A549 (cell line): ENCODE measurements at regions of chr7 and their contacts with region 1.

Region 1: DNA sequence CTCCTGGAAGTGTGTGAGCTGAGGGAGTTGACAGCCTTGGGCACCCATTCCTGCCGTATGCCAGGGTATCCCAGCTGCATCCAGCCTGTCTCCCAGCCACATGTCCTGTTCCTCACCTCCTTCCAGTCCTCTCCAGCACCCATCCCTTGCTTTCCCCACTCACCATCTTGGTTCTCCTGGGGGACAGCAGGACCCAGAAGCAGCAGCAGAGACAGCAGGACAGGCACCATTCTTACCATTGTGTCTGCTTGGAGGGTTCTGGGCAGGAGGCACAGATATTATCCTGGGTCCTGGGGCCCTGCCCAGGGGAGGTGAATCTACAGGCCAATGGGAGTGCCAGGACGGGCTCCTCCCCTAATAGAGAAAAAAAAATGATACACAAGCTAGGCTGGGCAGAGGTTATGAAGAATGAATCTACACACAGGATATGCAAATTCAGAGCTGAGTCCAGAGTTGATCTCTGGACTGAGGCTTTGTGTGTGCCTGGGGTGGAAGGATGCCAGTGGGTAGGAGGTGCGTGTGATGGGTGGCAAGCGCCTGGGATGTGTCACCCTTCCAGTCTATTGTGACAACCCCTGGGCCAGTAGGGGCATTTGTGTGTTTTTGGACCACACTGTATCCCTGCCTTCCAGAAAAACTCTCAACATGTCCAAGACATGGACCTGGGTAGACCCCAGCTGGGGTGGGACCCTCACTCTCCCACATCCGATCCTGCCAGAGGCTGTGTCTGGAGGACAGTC is at the start of gene AZGP1:
- DNase-seq: no peak
- ATAC-seq: peak in 1 of 2 experiments; percentile 21; a peak in 3 of 6 replicates
- H3K4me3 ChIP-seq: no peak within 1 kb of the TSS
- H3K27ac ChIP-seq: no peak within 1 kb of the TSS
- H3K4me1 ChIP-seq: no peaks in the 10 kb centered on the region
- CTCF ChIP-seq: no peak
- EP300 ChIP-seq: no peak
- POLR2A ChIP-seq: no peak
- RAD21 ChIP-seq: no peak
- polyA plus RNA-seq, gene AZGP1: 0.13 and 0.48 TPM in 2 replicates

Region 2: GRCh38 chr7:99325545-99326407 is 650.2 kb before region 1 on chr7 and contains the start of gene ARPC1A:
- CTCF ChIA-PET with region 1: no interaction called
- POLR2A ChIA-PET with region 1: no interaction called
- DNase-seq: peak; percentile 91 to 92
- ATAC-seq: peak; percentile 96 to 98
- H3K4me3 ChIP-seq: peak within 1 kb of the TSS; percentile 70
- H3K27ac ChIP-seq: peak within 1 kb of the TSS; percentile 96 to 97
- H3K4me1 ChIP-seq: peaks cover 40% of the 10 kb centered on the region
- CTCF ChIP-seq: no peak
- EP300 ChIP-seq: no peak
- POLR2A ChIP-seq: peak; percentile 98
- RAD21 ChIP-seq: peak in 1 of 2 experiments; percentile 15; a peak in 2 of 5 replicates
- polyA plus RNA-seq, gene ARPC1A: 120 TPM in 2 replicates

Region 3: GRCh38 chr7:99531354-99531765 is 444.6 kb before region 1 on chr7:
- CTCF ChIA-PET with region 1: no interaction called
- POLR2A ChIA-PET with region 1: no interaction called
- DNase-seq: peak in 1 of 2 experiments; percentile 55
- ATAC-seq: no peak
- H3K4me3 ChIP-seq: no peak overlapping the region; the same call in 2 of the 3 replicates
- H3K27ac ChIP-seq: no peak overlapping the region
- H3K4me1 ChIP-seq: no peaks in the 10 kb centered on the region
- CTCF ChIP-seq: no peak
- EP300 ChIP-seq: no peak
- POLR2A ChIP-seq: no peak
- RAD21 ChIP-seq: no peak

Region 4: DNA sequence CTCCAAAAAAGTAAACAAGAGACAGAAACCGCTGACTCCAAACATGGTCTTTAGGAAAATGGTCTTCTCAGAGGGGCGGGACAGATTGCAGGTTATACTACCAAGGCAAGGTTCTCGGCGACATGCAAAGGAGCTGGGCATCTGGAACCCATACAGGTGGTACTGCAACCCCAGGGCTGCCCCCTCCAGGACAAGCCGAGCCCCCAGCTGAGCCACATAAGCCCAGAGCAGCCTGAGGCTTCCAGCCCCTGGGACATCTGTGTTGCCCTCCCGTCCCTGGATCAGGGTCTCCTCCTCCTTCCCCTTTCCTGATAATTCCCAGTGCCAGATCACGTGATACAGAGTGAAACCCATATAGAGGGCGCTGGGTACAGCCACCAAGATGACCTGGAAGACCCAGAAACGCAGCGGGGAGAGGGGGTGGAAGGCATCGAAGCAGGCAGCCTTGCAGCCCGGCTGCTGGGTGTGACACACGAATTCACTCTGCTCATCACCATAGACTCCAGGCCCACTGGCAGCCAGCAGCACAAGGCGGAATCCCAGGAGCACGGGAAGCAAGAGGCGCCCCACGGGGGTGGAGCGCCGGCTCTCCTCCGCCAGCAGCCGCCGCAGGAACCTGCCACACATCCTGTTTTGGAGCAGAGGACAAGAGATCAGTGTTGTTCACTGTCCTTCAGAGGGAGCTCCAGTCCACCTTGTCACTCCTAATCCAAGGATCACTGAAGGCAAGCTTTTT is 46.8 kb before region 1 on chr7 and contains the start of gene GJC3:
- CTCF ChIA-PET with region 1: interaction called, 14 read pairs
- POLR2A ChIA-PET with region 1: no interaction called
- DNase-seq: peak; percentile 75 to 85
- ATAC-seq: peak; percentile 96 to 98
- H3K4me3 ChIP-seq: peak within 1 kb of the TSS; percentile 46
- H3K27ac ChIP-seq: peak within 1 kb of the TSS; percentile 66 to 83
- H3K4me1 ChIP-seq: 0 out of 3 replicates have a peak, but pooled peaks cover 7% of the 10 kb centered on the region
- CTCF ChIP-seq: peak; percentile 54
- EP300 ChIP-seq: no peak
- POLR2A ChIP-seq: no peak
- RAD21 ChIP-seq: peak; percentile 43 to 55
- polyA plus RNA-seq, gene GJC3: 0.30 and 0.36 TPM in 2 replicates

Region 5: GRCh38 chr7:99955235-99955634 is 20.7 kb before region 1 on chr7:
- CTCF ChIA-PET with region 1: interaction called, 12 read pairs
- POLR2A ChIA-PET with region 1: no interaction called
- DNase-seq: no peak
- ATAC-seq: peak; percentile 14 to 27; a peak in 2 of 6 replicates
- H3K4me3 ChIP-seq: no peak overlapping the region
- H3K27ac ChIP-seq: no peak overlapping the region
- H3K4me1 ChIP-seq: no peaks in the 10 kb centered on the region
- CTCF ChIP-seq: no peak
- EP300 ChIP-seq: no peak
- POLR2A ChIP-seq: no peak
- RAD21 ChIP-seq: no peak